ENCODE measurements at regions of chr4 and their contacts with region 1.

Region 1: DNA sequence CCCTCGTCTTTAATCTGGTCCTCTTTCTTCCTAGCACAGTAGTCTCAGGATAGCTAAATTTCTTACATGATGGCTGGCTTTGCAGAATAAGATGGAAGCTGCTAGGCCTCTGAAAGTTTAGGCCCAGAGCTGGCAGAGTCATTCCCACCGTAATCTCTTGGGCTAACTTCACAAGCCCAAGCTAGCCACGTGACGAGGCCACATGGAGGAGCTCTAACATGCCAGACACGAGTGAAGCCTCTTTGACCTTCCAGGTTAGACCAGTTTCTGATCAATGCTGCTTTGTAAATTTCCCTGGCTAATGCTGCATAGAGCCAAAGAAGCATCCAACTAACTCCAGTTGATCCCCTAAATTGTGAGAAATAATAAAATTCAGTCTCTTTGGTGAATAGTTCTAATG is 9.5 kb upstream of the CENPE start:
- DNase-seq: no peak
- H3K4me3 ChIP-seq: no peak overlapping the region
- H3K4me3 Mint-ChIP-seq: no peak overlapping the region
- H3K27ac ChIP-seq: no peak overlapping the region
- H3K27ac Mint-ChIP-seq: no peak overlapping the region
- H3K4me1 ChIP-seq: no peaks in the 10 kb centered on the region
- H3K4me1 Mint-ChIP-seq: no peaks in the 10 kb centered on the region
- H3K27me3 ChIP-seq: no peaks in the 10 kb centered on the region
- H3K27me3 Mint-ChIP-seq: peaks cover 10 to 11% of the 10 kb centered on the region in 2 donors

Region 2: GRCh38 chr4:103150677-103151076 is 57.0 kb before region 1 on chr4:
- CTCF ChIA-PET with region 1: no interaction called
- POLR2A ChIA-PET with region 1: no interaction called
- intact Hi-C with region 1: loop called (anchors 10 kb)
- DNase-seq: no peak
- H3K4me3 ChIP-seq: no peak overlapping the region
- H3K4me3 Mint-ChIP-seq: no peak overlapping the region
- H3K27ac ChIP-seq: no peak overlapping the region
- H3K27ac Mint-ChIP-seq: no peak overlapping the region
- H3K4me1 ChIP-seq: no peaks in the 10 kb centered on the region
- H3K4me1 Mint-ChIP-seq: peaks cover 0 to 1% (median 0%) of the 10 kb centered on the region in 4 donors
- H3K27me3 ChIP-seq: no peaks in the 10 kb centered on the region
- H3K27me3 Mint-ChIP-seq: no peaks in the 10 kb centered on the region